PC-9 (cell line): ENCODE measurements at regions of chr9 and their contacts with region 1.

Region 1: DNA sequence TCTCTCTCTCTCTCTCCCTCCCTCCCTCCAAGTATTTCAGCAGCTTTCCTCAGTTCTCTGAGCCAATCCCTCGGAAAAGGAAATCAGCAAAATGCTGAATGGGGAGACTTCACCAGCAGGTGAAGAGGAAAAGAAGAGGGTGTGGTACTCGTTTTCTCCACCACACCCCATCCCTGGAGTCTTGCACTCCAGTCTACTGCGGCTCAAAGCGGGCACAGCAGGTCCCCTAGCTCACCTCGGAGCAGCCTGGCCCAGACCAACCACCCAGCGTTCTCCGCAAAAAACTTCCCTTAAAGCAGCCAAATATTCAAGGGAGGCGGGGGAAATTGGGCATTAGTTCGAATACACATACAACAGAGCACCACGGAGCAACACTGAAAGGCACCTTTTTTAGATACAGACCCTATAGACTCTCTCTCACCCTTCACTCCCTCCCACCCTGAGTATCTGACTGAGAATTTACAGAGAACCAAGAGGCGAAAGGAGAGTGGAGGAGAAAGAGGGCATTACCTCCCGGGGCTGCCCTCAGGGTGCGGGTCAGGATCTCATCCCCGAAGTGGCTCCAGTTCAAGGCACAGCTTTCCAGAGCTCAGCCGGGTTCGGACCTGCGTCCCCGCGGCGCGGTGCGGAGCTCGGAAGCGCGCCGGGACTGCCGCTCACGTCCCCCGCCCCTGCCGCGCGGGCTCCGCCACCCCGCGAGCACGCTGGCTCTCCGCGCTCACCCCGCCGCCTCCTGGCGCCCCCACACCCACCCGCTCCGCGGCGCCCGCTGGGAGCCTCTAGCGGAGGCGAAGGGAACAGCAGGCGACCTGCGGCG is 1638.5 kb upstream of the C9orf72 start:
- DNase-seq: peak in 1 of 2 experiments; percentile 57
- H3K4me3 ChIP-seq: peak overlapping the region; percentile 56; the same call in 1 of the 2 replicates
- H3K27ac ChIP-seq: no peak overlapping the region
- H3K4me1 ChIP-seq: no peaks in the 10 kb centered on the region
- H3K27me3 ChIP-seq: peaks cover 22% of the 10 kb centered on the region
- CTCF ChIP-seq: peak; percentile 59

Region 2: DNA sequence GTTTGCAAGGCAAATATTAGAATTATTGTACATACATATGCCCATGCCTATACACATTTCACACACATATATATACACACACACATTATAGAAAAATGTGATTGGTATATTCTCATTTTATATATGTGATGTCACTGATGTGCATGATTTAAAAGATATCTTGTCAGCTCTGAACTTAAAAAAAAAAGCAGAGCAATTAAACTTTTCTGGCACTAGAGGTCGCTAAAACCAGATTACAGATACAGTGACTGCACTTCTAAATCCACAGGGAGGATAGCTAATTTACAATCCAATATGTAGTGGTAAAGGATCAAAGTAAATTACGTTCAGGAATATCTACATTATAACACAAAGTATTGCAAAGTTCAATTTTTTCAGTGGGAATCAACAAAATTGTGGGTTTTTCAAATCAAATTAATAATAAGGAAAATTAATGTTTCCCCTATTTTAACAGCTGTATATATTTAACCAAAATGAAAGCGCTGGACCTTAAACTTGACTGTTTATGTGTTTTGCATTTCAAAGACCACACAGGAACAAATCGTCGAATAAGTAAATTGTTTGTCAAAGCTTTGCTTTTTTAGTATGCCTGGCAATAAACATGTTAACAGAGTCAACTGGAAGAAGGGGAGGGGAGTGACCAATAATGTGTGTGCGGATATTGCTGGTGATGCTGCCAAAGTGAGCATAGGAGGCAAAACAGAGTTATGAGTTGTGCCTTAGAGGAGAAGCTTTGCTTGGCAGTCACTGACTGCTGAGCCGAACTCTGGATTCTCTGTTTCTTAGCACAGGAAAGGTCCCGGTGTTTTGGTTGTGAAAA is 437.2 kb before region 1 on chr9:
- CTCF ChIA-PET with region 1: no interaction called
- POLR2A ChIA-PET with region 1: no interaction called
- intact Hi-C with region 1: loop called (anchors 5 kb)
- DNase-seq: no peak
- H3K4me3 ChIP-seq: no peak overlapping the region
- H3K27ac ChIP-seq: no peak overlapping the region
- H3K4me1 ChIP-seq: no peaks in the 10 kb centered on the region
- H3K27me3 ChIP-seq: no peaks in the 10 kb centered on the region
- CTCF ChIP-seq: peak; percentile 36; the same call in 1 of the 2 replicates